ENCODE measurements at regions of chr15 and their contacts with region 1.

Region 1: DNA sequence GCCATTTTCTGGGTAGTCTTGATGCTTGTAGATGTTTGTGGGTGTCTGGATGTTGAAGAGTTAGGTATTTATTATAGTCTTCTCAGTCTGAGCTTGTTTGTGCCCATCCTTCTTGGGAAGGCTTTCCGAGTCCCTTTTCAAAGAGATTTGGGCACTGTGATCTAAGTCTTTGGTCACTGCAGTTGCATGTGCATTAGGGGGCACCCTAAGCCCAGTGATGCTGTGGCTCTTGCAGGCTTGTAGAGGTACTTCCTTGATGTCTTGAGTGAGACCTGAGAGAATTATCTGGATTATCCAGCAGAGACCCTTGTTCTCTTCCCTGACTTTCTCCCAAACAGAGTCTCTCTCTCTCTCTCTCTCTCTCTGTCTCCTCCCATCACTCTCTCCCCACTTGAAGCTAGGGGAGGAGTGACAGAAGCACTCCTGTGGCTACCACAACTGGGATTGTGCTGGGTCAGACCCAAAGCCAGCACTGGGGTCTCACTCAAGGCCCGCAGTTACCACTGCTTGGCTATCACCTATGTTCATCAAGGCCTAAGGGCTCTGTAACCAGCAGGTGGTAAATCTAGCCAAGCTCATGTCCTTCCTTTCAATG is 68.5 kb downstream of the TMCO5A start:
- DNase-seq: peak; percentile 38
- ATAC-seq: peak; percentile 97
- H3K4me3 ChIP-seq: no peak overlapping the region
- H3K27ac ChIP-seq: no peak overlapping the region
- H3K4me1 ChIP-seq: no peaks in the 10 kb centered on the region
- H3K27me3 ChIP-seq: no peaks in the 10 kb centered on the region
- CTCF ChIP-seq: peak; percentile 63 to 73 (median 66); a peak in 5 of 6 replicates
- EP300 ChIP-seq: no peak
- POLR2A ChIP-seq: no peak
- RAD21 ChIP-seq: peak; percentile 97

Region 2: GRCh38 chr15:38176155-38176554 is 173.2 kb after region 1 on chr15:
- CTCF ChIA-PET with region 1: no interaction called
- POLR2A ChIA-PET with region 1: no interaction called
- RAD21 ChIA-PET with region 1: no interaction called
- SMC1A ChIA-PET with region 1: no interaction called
- in situ Hi-C with region 1: no loop called
- intact Hi-C with region 1: loop called (anchors 10 kb)
- DNase-seq: peak; percentile 61
- ATAC-seq: peak; percentile 100
- H3K4me3 ChIP-seq: no peak overlapping the region
- H3K27ac ChIP-seq: no peak overlapping the region
- H3K4me1 ChIP-seq: 0 out of 2 replicates have a peak, but pooled peaks cover 5% of the 10 kb centered on the region
- H3K27me3 ChIP-seq: no peaks in the 10 kb centered on the region; a peak in 1 of 4 replicates
- CTCF ChIP-seq: no peak
- EP300 ChIP-seq: peak in 1 of 2 experiments; percentile 71; a peak in 1 of 4 replicates
- POLR2A ChIP-seq: no peak
- RAD21 ChIP-seq: no peak

Region 3: DNA sequence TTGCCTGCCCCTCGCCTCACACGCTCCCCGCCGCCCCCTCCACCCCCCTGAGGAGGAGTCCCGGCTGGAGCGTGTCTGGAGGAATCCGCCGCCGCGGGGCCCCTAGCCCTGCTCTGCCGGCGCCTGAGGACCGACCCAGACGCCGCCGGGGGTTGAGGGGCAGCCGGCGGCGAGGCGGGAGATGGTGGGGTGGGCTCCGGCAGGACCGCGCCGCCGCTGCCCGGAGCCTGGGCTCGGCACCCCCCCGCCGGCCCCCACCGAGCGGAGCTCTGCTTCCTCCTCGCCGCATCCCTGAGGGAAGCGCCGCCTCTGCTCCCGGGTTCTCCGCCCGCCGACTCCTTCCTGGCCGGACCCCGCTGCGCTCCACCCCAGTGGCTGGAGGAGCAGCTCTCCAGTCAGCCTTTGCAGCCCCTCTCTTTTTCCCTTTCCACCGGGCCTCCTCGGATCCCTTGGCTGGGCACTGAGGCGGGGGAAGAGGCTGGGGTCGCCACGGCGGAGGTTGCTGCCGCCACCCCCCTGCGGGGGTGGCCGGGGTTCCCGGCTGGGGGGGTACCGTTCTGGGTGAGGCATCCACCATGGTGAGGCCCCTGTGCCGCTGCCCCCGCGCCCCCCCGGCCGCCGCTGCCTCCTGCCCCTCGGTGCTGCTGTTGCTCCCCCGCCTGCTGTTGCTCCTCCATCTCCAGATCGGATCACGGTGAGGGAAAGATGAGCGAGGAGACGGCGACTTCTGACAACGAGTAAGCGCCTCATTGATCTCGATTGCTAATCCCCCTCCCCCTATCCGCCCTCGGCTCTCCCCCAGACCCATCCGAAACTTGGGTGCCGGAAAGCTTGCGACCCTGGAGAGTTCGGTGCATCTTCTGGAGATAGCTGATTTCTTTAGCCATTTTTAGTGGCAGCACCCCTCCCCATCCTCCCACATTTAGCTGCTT is 249.8 kb after region 1 on chr15 and contains the start of gene SPRED1:
- CTCF ChIA-PET with region 1: no interaction called
- POLR2A ChIA-PET with region 1: no interaction called
- RAD21 ChIA-PET with region 1: no interaction called
- SMC1A ChIA-PET with region 1: interaction called, 8 read pairs
- in situ Hi-C with region 1: no loop called
- intact Hi-C with region 1: loop called (anchors 5 kb)
- DNase-seq: no peak
- ATAC-seq: peak; percentile 57
- H3K4me3 ChIP-seq: peak within 1 kb of the TSS; percentile 94
- H3K27ac ChIP-seq: peak within 1 kb of the TSS; percentile 62
- H3K4me1 ChIP-seq: peaks cover 3% of the 10 kb centered on the region; the same call in 1 of the 2 replicates
- H3K27me3 ChIP-seq: no peaks in the 10 kb centered on the region; a peak in 2 of 4 replicates
- CTCF ChIP-seq: no peak
- EP300 ChIP-seq: no peak
- POLR2A ChIP-seq: no peak
- RAD21 ChIP-seq: no peak
- polyA plus RNA-seq, gene SPRED1: 0.08 to 0.13 TPM

Region 4: GRCh38 chr15:38354315-38354929 is 351.4 kb after region 1 on chr15:
- CTCF ChIA-PET with region 1: interaction called, 116 read pairs
- POLR2A ChIA-PET with region 1: interaction called, 4 read pairs
- RAD21 ChIA-PET with region 1: interaction called, 71 read pairs
- SMC1A ChIA-PET with region 1: interaction called, 76 read pairs
- in situ Hi-C with region 1: loop called (anchors 5 kb)
- intact Hi-C with region 1: loop called (anchors 1 kb)
- DNase-seq: peak; percentile 31
- ATAC-seq: peak; percentile 86
- H3K4me3 ChIP-seq: no peak overlapping the region
- H3K27ac ChIP-seq: no peak overlapping the region
- H3K4me1 ChIP-seq: no peaks in the 10 kb centered on the region
- H3K27me3 ChIP-seq: no peaks in the 10 kb centered on the region
- CTCF ChIP-seq: peak; percentile 73 to 89 (median 80); a peak in 4 of 6 replicates
- EP300 ChIP-seq: no peak
- POLR2A ChIP-seq: no peak
- RAD21 ChIP-seq: peak; percentile 98

Region 5: DNA sequence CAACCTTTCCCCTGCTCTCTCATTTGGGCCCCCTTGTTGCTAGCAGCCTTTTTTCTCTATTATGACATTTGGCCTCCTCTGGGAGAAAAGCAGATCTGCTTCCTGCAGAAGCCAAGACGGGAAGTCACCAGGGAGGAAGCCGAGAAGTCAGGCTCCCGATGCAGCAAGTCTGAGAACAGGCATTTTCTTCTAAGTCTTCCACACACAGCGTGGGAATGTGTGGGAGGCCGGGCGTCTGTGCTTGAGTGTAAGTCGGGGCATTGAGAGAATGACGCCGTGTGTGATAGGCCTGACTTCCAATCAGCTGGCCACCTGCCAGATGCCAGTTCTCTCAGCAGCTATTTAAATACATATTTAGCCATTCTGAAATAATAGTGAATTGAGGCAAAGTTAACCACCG is 375.2 kb after region 1 on chr15:
- CTCF ChIA-PET with region 1: interaction called, 10 read pairs
- POLR2A ChIA-PET with region 1: no interaction called
- RAD21 ChIA-PET with region 1: no interaction called
- SMC1A ChIA-PET with region 1: interaction called, 7 read pairs
- in situ Hi-C with region 1: no loop called
- intact Hi-C with region 1: no loop called
- DNase-seq: no peak
- ATAC-seq: no peak
- H3K4me3 ChIP-seq: no peak overlapping the region
- H3K27ac ChIP-seq: no peak overlapping the region
- H3K4me1 ChIP-seq: no peaks in the 10 kb centered on the region
- H3K27me3 ChIP-seq: peaks cover 0 to 2% of the 10 kb centered on the region in 2 experiments; a peak in 2 of 4 replicates
- CTCF ChIP-seq: no peak
- EP300 ChIP-seq: no peak
- POLR2A ChIP-seq: no peak
- RAD21 ChIP-seq: no peak

Region 6: GRCh38 chr15:38389924-38390542 is 387.1 kb after region 1 on chr15:
- CTCF ChIA-PET with region 1: interaction called, 82 read pairs
- POLR2A ChIA-PET with region 1: no interaction called
- RAD21 ChIA-PET with region 1: interaction called, 10 read pairs
- SMC1A ChIA-PET with region 1: interaction called, 63 read pairs
- in situ Hi-C with region 1: no loop called
- intact Hi-C with region 1: loop called (anchors 1 kb)
- DNase-seq: peak; percentile 15
- ATAC-seq: peak; percentile 91
- H3K4me3 ChIP-seq: no peak overlapping the region
- H3K27ac ChIP-seq: no peak overlapping the region
- H3K4me1 ChIP-seq: no peaks in the 10 kb centered on the region
- H3K27me3 ChIP-seq: no peaks in the 10 kb centered on the region
- CTCF ChIP-seq: peak; percentile 80 to 88 (median 83)
- EP300 ChIP-seq: no peak
- POLR2A ChIP-seq: no peak
- RAD21 ChIP-seq: peak; percentile 79

Region 7: DNA sequence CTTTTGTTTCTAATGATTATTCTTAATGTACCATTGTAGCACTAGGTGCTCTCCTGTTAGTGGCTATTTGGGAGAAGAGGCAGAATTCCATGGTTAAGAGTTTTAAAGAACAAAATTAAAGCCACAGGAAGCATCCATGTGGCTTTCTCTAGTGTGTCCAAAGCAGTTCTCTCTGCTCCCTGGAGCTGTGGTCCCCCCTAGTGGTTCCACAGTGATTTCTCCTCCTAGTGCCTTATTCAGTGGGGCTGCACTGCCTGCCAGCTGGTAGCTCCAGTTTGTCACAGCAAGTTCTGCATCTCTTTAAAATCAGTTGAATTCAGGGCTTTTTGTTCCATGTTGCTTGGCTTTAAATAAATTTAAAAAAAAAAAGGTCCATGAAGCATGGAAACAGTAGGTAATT is 411.4 kb after region 1 on chr15:
- CTCF ChIA-PET with region 1: interaction called, 3 read pairs
- POLR2A ChIA-PET with region 1: no interaction called
- RAD21 ChIA-PET with region 1: no interaction called
- SMC1A ChIA-PET with region 1: interaction called, 4 read pairs
- in situ Hi-C with region 1: no loop called
- intact Hi-C with region 1: loop called (anchors 1 kb)
- DNase-seq: no peak
- ATAC-seq: peak; percentile 81
- H3K4me3 ChIP-seq: no peak overlapping the region
- H3K27ac ChIP-seq: no peak overlapping the region
- H3K4me1 ChIP-seq: no peaks in the 10 kb centered on the region
- H3K27me3 ChIP-seq: no peaks in the 10 kb centered on the region; a peak in 1 of 4 replicates
- CTCF ChIP-seq: peak; percentile 39 to 52 (median 51); a peak in 5 of 6 replicates
- EP300 ChIP-seq: no peak
- POLR2A ChIP-seq: no peak
- RAD21 ChIP-seq: peak; percentile 44

Measured in GM12878 (cell line).